Mammary epithelial cell (primary cell): ENCODE measurements at regions of chr11 and their contacts with region 1.

Region 1: DNA sequence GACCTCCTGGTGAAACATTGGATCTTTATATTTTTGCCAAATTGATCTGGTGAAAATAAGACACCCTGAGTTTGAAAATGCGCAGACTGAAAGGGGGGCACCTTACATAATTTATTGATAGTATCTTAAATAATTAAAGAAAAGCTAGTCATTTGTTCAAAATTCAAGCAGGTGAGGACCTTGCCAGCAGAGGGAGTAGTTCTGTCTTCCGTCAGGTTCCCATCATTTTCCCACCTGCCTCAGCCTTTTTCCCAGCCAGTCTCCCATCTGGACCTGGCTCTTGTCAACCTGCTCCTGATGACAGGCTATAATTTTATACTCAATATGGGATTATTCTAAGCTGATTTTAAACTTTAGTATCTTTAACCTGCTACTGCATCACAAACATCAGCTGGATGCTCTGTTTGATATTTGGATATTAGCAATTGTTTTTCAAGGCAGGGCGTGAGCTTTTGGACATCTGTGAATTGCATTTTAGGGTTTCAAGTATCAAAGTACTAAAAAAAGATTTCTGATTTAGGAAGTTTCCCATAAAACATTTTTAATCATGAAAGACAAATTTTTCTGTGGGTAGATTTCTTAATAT is 132.0 kb downstream of the ELP4 start:
- DNase-seq: no peak
- H3K4me3 ChIP-seq: no peak overlapping the region
- H3K27ac ChIP-seq: no peak overlapping the region
- H3K4me1 ChIP-seq: peaks cover 14% of the 10 kb centered on the region
- H3K27me3 ChIP-seq: no peaks in the 10 kb centered on the region
- CTCF ChIP-seq: peak; percentile 71 to 76

Region 2: DNA sequence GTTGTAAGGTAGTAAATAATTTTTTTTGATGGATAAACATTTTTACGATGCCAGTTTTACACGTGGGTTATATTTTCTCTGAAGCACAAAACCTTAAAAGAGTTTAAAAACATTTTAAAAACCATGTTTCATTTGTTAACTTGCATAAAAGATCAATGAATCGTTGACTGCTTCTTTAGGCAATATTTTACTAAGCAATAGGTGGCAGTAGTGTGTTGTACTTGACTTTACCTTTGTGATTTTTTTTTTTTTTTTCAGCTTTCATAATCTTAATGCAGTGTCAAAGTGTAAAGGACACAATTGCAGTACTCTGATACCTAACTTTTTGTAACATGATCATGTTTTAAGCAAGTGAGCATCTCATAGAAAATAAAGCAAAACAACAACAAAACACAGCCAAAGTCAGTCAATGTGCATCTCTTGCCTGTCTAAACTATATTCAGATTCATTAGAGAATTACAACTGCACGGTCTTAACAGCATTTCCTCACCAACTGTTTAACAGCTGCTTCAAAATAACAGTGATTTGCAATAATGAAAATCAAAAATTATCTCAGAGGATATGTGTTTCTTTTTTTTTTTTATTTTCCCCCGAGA is 244.2 kb before region 1 on chr11:
- CTCF ChIA-PET with region 1: no interaction called
- dilution Hi-C with region 1: no loop called
- in situ Hi-C with region 1: no loop called
- intact Hi-C with region 1: loop called (anchors 5 kb)
- DNase-seq: peak; percentile 2
- H3K4me3 ChIP-seq: no peak overlapping the region
- H3K27ac ChIP-seq: no peak overlapping the region
- H3K4me1 ChIP-seq: no peaks in the 10 kb centered on the region
- H3K27me3 ChIP-seq: no peaks in the 10 kb centered on the region
- CTCF ChIP-seq: peak; percentile 65 to 73

Region 3: GRCh38 chr11:31433851-31434250 is 207.7 kb before region 1 on chr11:
- CTCF ChIA-PET with region 1: no interaction called
- dilution Hi-C with region 1: no loop called
- in situ Hi-C with region 1: no loop called
- intact Hi-C with region 1: no loop called
- DNase-seq: no peak
- H3K4me3 ChIP-seq: no peak overlapping the region
- H3K27ac ChIP-seq: no peak overlapping the region
- H3K4me1 ChIP-seq: peaks cover 12% of the 10 kb centered on the region
- H3K27me3 ChIP-seq: no peaks in the 10 kb centered on the region
- CTCF ChIP-seq: no peak

Region 4: GRCh38 chr11:31655483-31655882 is 13.9 kb after region 1 on chr11:
- CTCF ChIA-PET with region 1: interaction called, 15 read pairs
- dilution Hi-C with region 1: no loop called
- in situ Hi-C with region 1: no loop called
- intact Hi-C with region 1: no loop called
- DNase-seq: peak; percentile 89
- H3K4me3 ChIP-seq: no peak overlapping the region
- H3K27ac ChIP-seq: peak overlapping the region; percentile 55
- H3K4me1 ChIP-seq: peaks cover 19% of the 10 kb centered on the region
- H3K27me3 ChIP-seq: no peaks in the 10 kb centered on the region
- CTCF ChIP-seq: no peak

Region 5: DNA sequence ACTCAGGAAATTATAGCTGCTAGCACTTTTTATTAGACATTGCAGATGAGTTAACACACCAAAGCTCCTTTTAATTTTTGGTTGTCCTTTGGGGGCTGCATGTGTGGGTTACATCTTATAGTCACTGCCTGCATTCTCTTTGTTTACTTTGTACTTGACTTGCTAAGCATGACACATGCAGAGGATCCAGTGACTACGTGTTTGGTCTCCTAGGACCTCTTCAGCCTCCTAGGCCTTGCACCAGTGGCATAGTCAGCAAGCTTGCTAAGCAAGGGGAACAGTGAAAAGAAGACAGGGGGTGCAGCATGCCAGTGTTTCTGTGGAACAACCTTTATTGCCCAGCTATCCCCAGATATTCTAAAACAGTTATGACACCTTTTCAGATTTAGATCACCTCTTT is 61.4 kb after region 1 on chr11:
- CTCF ChIA-PET with region 1: no interaction called
- dilution Hi-C with region 1: no loop called
- in situ Hi-C with region 1: no loop called
- intact Hi-C with region 1: no loop called
- DNase-seq: no peak
- H3K4me3 ChIP-seq: no peak overlapping the region
- H3K27ac ChIP-seq: no peak overlapping the region
- H3K4me1 ChIP-seq: no peaks in the 10 kb centered on the region
- H3K27me3 ChIP-seq: no peaks in the 10 kb centered on the region
- CTCF ChIP-seq: no peak

Region 6: DNA sequence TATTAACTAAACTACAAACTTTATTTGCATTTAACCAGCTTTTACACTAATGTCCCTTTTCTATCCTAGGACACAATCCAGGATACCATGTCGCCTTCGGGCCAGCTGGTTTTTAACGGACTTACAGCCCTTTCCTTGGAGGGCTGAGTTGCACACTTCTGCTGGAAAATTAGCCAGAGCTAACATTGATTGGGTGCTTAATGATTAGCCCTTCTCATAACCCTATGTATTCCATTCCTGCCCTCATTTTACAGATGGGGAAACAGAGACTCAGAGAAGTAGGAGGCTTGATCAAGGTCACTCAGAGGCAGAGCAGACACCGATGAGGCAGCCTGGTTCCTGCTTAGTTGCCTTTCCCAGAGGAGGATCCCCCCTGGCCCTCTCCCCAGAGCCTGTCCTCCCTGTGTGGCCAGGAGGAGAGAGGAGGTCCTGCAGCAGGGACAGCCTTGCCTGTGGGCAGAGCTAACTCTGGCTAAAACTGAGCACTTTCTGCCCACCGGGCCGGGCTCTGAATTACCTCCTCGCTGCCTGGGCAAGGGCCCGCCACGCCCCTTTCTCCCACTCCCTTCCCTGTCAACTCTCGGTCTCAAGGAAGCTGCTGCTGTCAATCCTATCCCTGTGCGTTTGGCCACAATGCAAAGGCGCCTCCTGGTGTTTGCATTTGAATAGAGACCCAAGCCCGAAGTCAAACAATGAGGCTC is 229.2 kb after region 1 on chr11:
- CTCF ChIA-PET with region 1: interaction called, 4 read pairs
- dilution Hi-C with region 1: no loop called
- in situ Hi-C with region 1: loop called in 1 of 2 experiments (anchors 25 kb)
- intact Hi-C with region 1: loop called (anchors 1 kb)
- DNase-seq: peak; percentile 23
- H3K4me3 ChIP-seq: no peak overlapping the region
- H3K27ac ChIP-seq: no peak overlapping the region
- H3K4me1 ChIP-seq: peaks cover 7% of the 10 kb centered on the region
- H3K27me3 ChIP-seq: no peaks in the 10 kb centered on the region
- CTCF ChIP-seq: peak; percentile 42 to 83

Region 7: GRCh38 chr11:32006799-32007388 is 365.3 kb after region 1 on chr11:
- CTCF ChIA-PET with region 1: interaction called, 4 read pairs
- dilution Hi-C with region 1: no loop called
- in situ Hi-C with region 1: no loop called
- intact Hi-C with region 1: loop called (anchors 1 kb)
- DNase-seq: peak; percentile 38
- H3K4me3 ChIP-seq: no peak overlapping the region
- H3K27ac ChIP-seq: no peak overlapping the region
- H3K4me1 ChIP-seq: peaks cover 8% of the 10 kb centered on the region
- H3K27me3 ChIP-seq: no peaks in the 10 kb centered on the region
- CTCF ChIP-seq: peak; percentile 62 to 85